Aorta (tissue), 5 donors: ENCODE measurements at regions of chr15 and their contacts with region 1.

Region 1: DNA sequence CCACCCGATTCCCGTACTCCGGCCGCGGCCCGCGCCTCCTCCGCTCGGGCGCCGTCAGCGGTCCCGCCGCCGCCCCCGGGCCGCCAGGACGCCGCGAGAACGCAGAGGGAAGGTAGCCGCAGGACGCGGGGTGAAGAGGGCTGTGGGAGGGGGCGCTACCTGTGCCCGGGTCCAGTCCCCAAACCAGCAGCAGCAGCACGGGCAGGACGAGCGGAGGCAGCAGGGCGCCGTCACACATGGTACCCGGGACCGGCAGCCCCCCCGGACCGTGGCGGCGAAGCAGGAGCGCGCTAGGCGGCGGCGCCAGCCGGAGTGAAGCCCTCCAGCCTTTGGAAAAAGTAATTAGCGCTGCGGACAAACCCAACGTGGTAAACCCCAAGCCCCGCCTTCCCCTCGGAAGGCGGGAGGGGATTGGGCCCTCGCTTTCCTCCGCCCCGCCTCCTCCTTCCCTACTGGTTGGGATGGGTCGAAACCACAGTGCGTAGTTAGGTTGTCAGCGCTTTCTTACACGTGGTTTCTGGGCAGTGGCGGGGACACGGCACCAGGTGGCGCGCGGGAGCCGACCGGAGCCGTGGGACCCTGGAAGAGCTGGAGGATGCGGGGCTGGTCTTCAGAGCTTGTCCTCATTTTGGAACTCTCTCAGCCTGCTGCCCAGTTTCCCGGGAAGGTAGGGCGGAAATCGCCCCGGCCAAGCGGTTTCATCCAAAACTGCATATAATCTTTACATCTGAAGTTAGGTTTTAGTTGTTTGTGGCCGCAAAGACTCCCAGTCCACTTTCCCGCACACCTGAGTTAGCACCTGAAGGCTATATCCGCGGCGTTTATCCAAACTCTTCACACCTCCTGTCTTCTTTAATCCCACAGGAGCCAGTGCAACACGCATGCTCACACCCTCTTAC is at the start of gene ADAMTS17:
- DNase-seq: peak; percentile 97 to 98
- ATAC-seq: peak; percentile 97
- H3K4me3 ChIP-seq: peak within 1 kb of the TSS; percentile 55 to 76
- H3K27ac ChIP-seq: peak within 1 kb of the TSS in 1 of 2 donors; percentile 76
- H3K4me1 ChIP-seq: peaks cover 0 to 2% of the 10 kb centered on the region in 2 donors
- H3K27me3 ChIP-seq: no peaks in the 10 kb centered on the region
- total RNA-seq, gene ADAMTS17: 1.8 to 4.2 TPM

Region 2: DNA sequence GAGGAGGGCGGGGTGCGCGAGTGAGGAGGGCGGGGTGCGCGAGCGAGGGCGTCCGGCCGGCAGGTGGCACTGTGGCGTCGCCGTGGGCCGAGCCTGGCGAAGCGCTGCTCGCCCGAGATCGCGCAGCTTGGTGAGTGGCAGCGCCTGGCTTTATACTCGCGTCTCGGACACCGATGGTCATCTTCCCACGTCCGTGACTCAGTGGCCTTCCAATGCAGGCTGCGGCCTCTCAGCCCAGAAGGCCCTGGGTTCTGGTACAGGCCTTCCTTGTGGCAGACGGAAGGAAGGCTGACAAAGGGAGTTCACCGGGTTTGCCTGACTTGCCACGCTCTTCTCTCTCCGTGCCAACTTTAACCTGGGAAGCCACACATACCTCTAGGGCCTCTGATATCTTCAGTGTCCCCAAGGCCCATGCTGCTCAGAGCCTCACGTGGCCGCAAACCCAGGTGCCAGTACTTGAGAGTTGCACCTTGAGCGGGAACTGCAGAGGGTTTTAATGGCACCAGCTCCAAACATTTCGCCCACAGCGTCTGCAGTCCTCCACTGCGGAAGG is 413.4 kb before region 1 on chr15:
- intact Hi-C with region 1: loop called (anchors 2 to 5 kb)
- DNase-seq: peak; percentile 89 to 92
- ATAC-seq: peak; percentile 97
- H3K4me3 ChIP-seq: peak overlapping the region in 1 of 2 donors; percentile 12
- H3K27ac ChIP-seq: peak overlapping the region in 1 of 2 donors; percentile 43
- H3K4me1 ChIP-seq: no peaks in the 10 kb centered on the region
- H3K27me3 ChIP-seq: no peaks in the 10 kb centered on the region

Region 3: GRCh38 chr15:100131321-100132224 is 210.3 kb before region 1 on chr15:
- intact Hi-C with region 1: loop called in 1 of 2 experiments (anchors 10 kb)
- DNase-seq: peak; percentile 82 to 83
- ATAC-seq: peak; percentile 75
- H3K4me3 ChIP-seq: no peak overlapping the region
- H3K27ac ChIP-seq: no peak overlapping the region
- H3K4me1 ChIP-seq: no peaks in the 10 kb centered on the region
- H3K27me3 ChIP-seq: no peaks in the 10 kb centered on the region

Region 4: GRCh38 chr15:100241572-100242482 is 100.1 kb before region 1 on chr15:
- intact Hi-C with region 1: loop called in 1 of 2 experiments (anchors 5 kb)
- DNase-seq: peak in 1 of 2 donors; percentile 61
- ATAC-seq: peak; percentile 73
- H3K4me3 ChIP-seq: no peak overlapping the region
- H3K27ac ChIP-seq: peak overlapping the region in 1 of 2 donors; percentile 84
- H3K4me1 ChIP-seq: peaks cover 0 to 4% of the 10 kb centered on the region in 2 donors
- H3K27me3 ChIP-seq: no peaks in the 10 kb centered on the region

Region 5: GRCh38 chr15:100383302-100384107 is 41.6 kb after region 1 on chr15:
- intact Hi-C with region 1: loop called in 1 of 2 experiments (anchors 5 kb)
- DNase-seq: no peak
- ATAC-seq: peak; percentile 44
- H3K4me3 ChIP-seq: no peak overlapping the region
- H3K27ac ChIP-seq: no peak overlapping the region
- H3K4me1 ChIP-seq: no peaks in the 10 kb centered on the region
- H3K27me3 ChIP-seq: peaks cover 0 to 1% of the 10 kb centered on the region in 2 donors